Activated CD8-positive, alpha-beta T cell treated with anti-CD3 and anti-CD28 coated beads, Interleukin-2, amount 10 ng/mL, durations not matched to agents 7 days and 5 days (primary cell): ENCODE measurements at regions of chr3 and their contacts with region 1.

Region 1: GRCh38 chr3:169966428-169966950 is at the start of gene SEC62:
- DNase-seq: peak; percentile 94
- ATAC-seq: peak; percentile 93
- H3K4me3 Mint-ChIP-seq: peak within 1 kb of the TSS; percentile 82
- H3K27ac Mint-ChIP-seq: peak within 1 kb of the TSS; percentile 98
- H3K4me1 Mint-ChIP-seq: peaks cover 40% of the 10 kb centered on the region
- H3K27me3 Mint-ChIP-seq: no peaks in the 10 kb centered on the region
- total RNA-seq, gene SEC62: 46.5 to 49.9 TPM

Region 2: GRCh38 chr3:169764452-169765274 is 201.8 kb before region 1 on chr3 and contains the start of gene TERC:
- CTCF ChIA-PET with region 1: interaction called, 4 read pairs
- POLR2A ChIA-PET with region 1: interaction called, 10 read pairs
- DNase-seq: peak; percentile 96
- ATAC-seq: peak; percentile 87
- H3K4me3 Mint-ChIP-seq: peak within 1 kb of the TSS; percentile 92
- H3K27ac Mint-ChIP-seq: peak within 1 kb of the TSS; percentile 98
- H3K4me1 Mint-ChIP-seq: peaks cover 35% of the 10 kb centered on the region
- H3K27me3 Mint-ChIP-seq: no peaks in the 10 kb centered on the region
- total RNA-seq, gene TERC: 6.9 to 10.8 TPM

Region 3: DNA sequence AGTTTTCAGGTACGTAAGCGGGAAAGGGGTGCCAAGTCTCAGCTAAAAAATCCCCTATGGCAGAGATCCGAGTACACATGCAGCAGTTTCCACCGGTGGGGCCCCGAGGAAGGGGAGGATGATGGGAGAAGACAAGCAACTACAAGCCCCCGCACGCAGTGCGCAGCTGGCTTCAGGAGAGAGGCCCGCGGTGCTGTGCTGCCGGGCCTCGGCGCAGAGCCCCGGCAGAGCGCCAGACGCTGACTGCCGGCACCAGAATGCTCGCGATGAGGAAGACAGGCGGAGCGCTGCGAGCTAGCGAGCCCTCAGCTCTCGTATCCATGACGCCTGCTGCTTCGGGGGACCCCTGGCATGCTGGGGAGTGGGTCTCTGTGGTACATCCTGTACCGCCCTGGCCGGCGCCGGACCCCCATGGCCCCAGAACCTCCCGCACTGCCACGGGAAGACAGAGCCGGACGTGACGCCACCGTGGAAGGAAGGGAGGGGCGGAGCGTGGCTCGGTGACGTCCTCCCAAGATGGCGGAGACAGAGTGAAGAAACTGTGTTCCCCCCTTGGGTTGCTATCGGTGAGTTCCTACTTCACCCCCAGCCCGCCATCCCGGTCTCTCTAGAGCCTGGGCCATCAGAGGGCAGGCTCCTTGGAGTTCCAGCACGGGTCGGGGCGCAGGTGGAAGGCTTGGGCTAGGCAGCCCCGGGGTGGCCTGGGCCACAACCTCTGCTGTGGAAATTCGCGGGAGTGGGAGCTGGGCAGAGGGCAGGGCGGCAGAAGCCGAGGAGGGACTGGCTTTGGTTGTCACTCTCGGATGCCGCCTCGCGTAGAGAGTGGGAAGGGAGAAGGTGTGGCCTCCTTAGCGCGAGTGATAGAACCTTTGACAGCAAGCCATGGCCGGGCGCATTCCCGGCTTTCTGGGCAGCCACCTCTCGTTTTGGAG is 193.3 kb before region 1 on chr3 and contains the start of gene MYNN:
- CTCF ChIA-PET with region 1: interaction called, 5 read pairs
- POLR2A ChIA-PET with region 1: interaction called, 12 read pairs
- DNase-seq: peak; percentile 95
- ATAC-seq: peak; percentile 82
- H3K4me3 Mint-ChIP-seq: peak within 1 kb of the TSS; percentile 98
- H3K27ac Mint-ChIP-seq: peak within 1 kb of the TSS; percentile 100
- H3K4me1 Mint-ChIP-seq: peaks cover 42% of the 10 kb centered on the region
- H3K27me3 Mint-ChIP-seq: no peaks in the 10 kb centered on the region
- total RNA-seq, gene MYNN: 15.7 to 16.4 TPM

Region 4: DNA sequence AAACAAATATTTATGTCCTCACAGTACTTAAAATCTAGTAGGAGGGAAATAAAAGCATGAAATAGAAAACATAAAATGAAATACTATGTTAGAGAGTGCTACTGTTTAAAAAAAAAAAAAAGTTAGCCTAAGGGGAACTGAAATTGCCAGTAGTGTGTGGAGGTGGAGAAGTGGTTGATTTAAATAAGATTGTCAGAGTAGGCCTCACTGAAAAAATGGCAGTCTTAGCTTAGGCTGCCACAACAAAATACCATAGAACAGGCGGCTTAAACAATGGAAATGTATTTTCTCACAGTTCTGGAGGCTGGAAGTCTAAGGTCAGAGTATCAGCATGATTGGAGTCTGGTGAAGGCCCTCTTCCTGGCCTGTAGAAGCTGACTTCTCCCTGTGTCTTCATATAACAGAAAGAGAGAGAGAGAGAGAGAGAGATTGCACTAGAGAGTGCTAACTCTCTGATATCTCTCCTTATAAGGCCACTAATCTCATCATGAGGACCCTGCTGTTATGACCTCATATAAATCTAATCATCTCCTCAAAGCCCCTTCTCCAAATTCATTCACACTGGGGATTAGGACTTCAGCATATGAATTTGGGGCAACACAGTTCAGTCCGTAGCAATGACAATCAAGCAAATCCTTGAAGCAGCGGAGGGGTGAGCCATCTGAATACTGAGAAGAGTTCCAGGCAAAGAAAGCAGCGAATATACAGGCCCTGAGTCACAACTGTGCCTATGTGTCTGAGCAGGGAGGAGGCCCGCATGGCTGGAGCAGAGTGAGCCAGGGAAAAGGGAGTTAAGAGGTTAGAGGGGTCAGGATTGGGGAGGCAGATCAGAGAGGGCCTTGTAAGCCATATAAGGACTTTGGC is 130.2 kb before region 1 on chr3:
- CTCF ChIA-PET with region 1: no interaction called
- POLR2A ChIA-PET with region 1: no interaction called
- DNase-seq: no peak
- ATAC-seq: no peak
- H3K4me3 Mint-ChIP-seq: no peak overlapping the region
- H3K27ac Mint-ChIP-seq: no peak overlapping the region
- H3K4me1 Mint-ChIP-seq: no peaks in the 10 kb centered on the region
- H3K27me3 Mint-ChIP-seq: peaks cover 25% of the 10 kb centered on the region

Region 5: DNA sequence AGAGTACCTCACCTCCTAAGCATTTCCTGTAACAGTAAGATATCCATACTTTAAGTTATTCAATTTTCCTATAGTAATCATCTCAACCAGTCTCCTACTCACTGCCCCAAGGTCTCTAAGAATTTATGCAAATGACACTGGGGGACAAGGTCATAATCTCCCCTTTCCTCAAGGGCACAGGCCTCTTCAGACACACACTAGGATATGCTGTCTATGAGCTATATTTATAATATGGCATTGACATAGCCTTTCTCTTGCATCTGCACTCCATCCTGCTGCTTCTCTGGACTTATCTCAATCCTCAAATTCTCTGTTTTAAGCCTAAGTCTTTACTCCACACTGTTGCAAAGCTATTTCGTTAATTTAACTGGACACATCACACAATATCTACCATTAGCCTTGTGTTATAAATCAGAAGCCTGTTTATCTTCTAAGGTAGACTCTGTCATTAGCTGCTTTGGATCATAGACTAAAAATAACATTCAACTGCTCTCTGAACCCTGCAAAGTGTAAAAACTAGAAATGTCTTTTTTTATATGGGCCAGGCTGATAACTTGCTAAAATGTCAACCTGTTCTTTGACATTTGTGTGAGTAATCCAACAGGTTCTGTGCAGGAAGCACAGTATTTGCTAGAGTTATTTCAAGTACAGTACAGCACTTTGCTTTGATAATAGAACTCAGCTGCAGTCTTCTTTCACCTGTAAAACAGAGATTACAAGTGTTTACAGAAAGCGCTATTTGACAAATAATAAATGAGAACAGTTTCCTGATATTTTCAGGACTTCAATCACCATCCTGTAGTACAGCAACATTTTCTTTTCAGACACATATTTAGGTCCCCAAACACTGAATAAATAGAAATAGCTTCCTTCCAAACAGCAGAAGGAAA is 17.7 kb before region 1 on chr3:
- CTCF ChIA-PET with region 1: interaction called, 19 read pairs
- POLR2A ChIA-PET with region 1: interaction called, 4 read pairs
- DNase-seq: no peak
- ATAC-seq: no peak
- H3K4me3 Mint-ChIP-seq: no peak overlapping the region
- H3K27ac Mint-ChIP-seq: no peak overlapping the region
- H3K4me1 Mint-ChIP-seq: peaks cover 10% of the 10 kb centered on the region
- H3K27me3 Mint-ChIP-seq: no peaks in the 10 kb centered on the region

Region 6: GRCh38 chr3:169980055-169980454 is 13.6 kb after region 1 on chr3:
- CTCF ChIA-PET with region 1: interaction called, 20 read pairs
- POLR2A ChIA-PET with region 1: interaction called, 9 read pairs
- DNase-seq: no peak
- ATAC-seq: no peak
- H3K4me3 Mint-ChIP-seq: no peak overlapping the region
- H3K27ac Mint-ChIP-seq: no peak overlapping the region
- H3K4me1 Mint-ChIP-seq: no peaks in the 10 kb centered on the region
- H3K27me3 Mint-ChIP-seq: no peaks in the 10 kb centered on the region

Region 7: GRCh38 chr3:170021083-170021482 is 54.6 kb after region 1 on chr3:
- CTCF ChIA-PET with region 1: interaction called, 20 read pairs
- POLR2A ChIA-PET with region 1: interaction called, 3 read pairs
- DNase-seq: no peak
- ATAC-seq: no peak
- H3K4me3 Mint-ChIP-seq: no peak overlapping the region
- H3K27ac Mint-ChIP-seq: no peak overlapping the region
- H3K4me1 Mint-ChIP-seq: peaks cover 8% of the 10 kb centered on the region
- H3K27me3 Mint-ChIP-seq: peaks cover 16% of the 10 kb centered on the region